Activated CD4-positive, alpha-beta T cell treated with anti-CD3 and anti-CD28 coated beads, Interleukin-2, amount 10 ng/mL, durations not matched to agents 7 days and 5 days (primary cell): ENCODE measurements at regions of chr15 and their contacts with region 1.

Region 1: DNA sequence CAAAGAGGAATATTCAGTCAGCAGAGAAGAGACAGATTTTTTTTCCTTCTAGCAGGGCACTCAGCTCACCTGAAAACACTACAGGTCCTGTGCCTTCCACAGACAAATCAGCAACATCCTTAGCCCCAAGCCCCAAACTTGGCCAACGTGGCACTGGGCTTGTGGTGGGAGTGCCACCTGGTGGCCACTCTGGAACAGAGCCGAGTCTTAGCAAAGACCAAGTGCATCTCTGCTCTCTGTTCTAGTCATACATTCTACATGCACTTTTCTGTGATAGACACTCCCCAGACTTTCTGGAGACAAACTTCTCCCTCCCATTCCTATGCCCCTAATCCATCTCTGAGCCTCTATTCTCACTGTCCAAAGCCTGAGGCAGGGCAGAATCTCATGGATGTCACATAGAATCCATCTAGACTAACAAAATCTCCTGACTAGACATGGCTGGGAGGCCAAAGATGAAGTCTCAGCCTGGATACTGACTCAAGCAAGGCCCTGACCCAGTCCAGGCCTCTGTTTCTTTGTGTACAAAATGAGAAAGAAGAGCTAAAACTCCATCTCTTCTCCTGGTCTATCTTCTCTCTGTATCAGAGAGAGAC is 5.1 kb upstream of the SEMA7A start:
- DNase-seq: peak; percentile 82
- H3K4me3 Mint-ChIP-seq: no peak overlapping the region
- H3K27ac Mint-ChIP-seq: no peak overlapping the region
- H3K4me1 Mint-ChIP-seq: peaks cover 28% of the 10 kb centered on the region
- H3K27me3 Mint-ChIP-seq: no peaks in the 10 kb centered on the region

Region 2: GRCh38 chr15:74251131-74251811 is 187.5 kb before region 1 on chr15:
- CTCF ChIA-PET with region 1: no interaction called
- POLR2A ChIA-PET with region 1: no interaction called
- DNase-seq: no peak
- H3K4me3 Mint-ChIP-seq: no peak overlapping the region
- H3K27ac Mint-ChIP-seq: no peak overlapping the region
- H3K4me1 Mint-ChIP-seq: no peaks in the 10 kb centered on the region
- H3K27me3 Mint-ChIP-seq: peaks cover 5% of the 10 kb centered on the region

Region 3: DNA sequence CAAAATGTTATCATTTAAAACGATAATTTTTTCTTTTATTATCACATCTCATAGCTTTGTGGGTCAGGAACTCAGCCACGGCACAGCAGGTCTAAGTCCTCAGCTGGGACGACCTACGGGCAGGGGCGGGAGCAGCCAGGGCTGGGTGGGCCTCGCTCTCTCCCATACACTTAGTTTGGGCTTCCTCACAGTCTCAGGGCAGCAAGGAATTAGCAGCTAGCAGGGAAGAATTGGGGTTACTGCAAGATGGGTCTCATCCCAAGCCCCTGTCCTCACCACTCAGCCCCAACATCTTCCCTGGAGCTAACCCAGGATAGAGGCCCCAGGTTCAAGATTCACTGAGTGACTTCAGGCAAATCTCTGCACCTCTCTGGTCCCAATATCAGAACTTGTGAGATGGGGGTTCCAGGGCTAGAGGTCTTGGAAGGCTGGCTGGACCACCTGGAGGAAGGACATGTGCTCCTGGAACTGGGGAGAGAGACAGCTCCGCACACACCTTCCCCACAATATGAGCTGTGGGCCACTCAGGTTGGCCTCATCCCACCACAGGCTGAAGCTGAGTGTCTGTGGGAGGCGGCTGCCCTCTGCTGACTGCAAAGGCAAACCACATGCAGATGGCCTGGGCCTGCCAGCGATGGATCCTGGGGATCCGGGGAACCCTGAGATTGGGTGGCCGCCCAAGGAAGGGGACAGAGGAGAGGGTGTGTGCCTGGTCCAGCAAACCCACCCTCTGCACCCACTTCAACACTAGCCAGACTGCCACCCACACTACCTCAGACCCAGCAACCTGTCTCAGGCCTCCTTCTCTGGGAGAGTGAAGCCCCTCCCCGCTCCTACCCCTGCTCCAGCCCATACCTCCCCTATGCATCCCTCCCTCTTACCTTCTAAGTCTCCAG is 116.4 kb before region 1 on chr15:
- CTCF ChIA-PET with region 1: no interaction called
- POLR2A ChIA-PET with region 1: no interaction called
- DNase-seq: peak; percentile 63
- H3K4me3 Mint-ChIP-seq: no peak overlapping the region
- H3K27ac Mint-ChIP-seq: no peak overlapping the region
- H3K4me1 Mint-ChIP-seq: peaks cover 13% of the 10 kb centered on the region
- H3K27me3 Mint-ChIP-seq: peaks cover 8% of the 10 kb centered on the region

Region 4: DNA sequence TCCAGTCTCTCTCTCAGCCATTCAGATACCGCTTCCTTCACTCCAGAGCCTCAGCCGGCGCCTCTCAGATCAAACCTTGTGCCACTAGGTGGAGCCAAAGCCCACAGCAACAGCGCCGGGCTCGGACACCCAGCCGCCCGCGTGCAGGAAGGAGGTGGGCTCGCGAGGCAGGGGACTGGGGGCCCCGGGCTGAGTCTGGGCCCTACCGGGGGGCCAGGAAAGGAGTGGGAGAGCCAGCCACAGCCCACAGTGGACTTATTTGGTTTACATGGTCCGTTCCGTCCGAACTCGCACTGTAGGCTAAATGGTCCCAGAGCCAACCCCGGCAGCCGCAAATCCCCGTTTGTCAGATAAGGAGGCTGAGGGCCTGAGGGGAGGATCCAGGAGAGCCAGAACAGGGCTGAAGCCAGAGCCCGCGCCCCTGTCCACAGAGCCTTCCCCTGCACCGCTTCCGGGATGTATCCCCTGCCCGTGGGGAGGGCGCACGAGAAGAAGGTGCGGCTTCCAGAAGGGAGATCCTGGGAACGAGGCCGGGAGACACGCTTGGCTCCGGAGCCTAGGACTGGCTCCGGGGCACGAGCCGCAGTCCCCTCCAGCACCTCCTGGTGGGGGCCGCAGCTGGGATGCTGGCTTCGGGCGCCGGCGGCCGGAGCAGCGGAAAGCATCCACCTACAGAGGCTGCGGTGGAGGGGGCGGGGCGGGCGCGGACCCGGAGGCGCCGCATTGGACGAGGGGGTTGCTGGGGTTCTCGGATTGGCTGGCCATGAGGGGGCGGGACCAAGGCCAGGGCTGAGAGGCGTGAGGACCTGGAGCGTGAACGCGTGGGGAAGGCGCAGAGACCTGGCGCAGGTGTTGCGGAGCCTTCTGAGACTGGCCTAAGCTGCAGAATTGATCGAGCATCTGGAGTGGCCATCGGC is 64.8 kb before region 1 on chr15:
- CTCF ChIA-PET with region 1: interaction called, 14 read pairs
- POLR2A ChIA-PET with region 1: no interaction called
- DNase-seq: peak; percentile 96
- H3K4me3 Mint-ChIP-seq: peak overlapping the region; percentile 79
- H3K27ac Mint-ChIP-seq: peak overlapping the region; percentile 65
- H3K4me1 Mint-ChIP-seq: peaks cover 25% of the 10 kb centered on the region
- H3K27me3 Mint-ChIP-seq: peaks cover 26% of the 10 kb centered on the region

Region 5: GRCh38 chr15:74389241-74390048 is 49.4 kb before region 1 on chr15:
- CTCF ChIA-PET with region 1: interaction called, 120 read pairs
- POLR2A ChIA-PET with region 1: interaction called, 3 read pairs
- DNase-seq: no peak
- H3K4me3 Mint-ChIP-seq: no peak overlapping the region
- H3K27ac Mint-ChIP-seq: no peak overlapping the region
- H3K4me1 Mint-ChIP-seq: peaks cover 50% of the 10 kb centered on the region
- H3K27me3 Mint-ChIP-seq: no peaks in the 10 kb centered on the region

Region 6: GRCh38 chr15:74451861-74452710 is 13.3 kb after region 1 on chr15:
- CTCF ChIA-PET with region 1: interaction called, 18 read pairs
- POLR2A ChIA-PET with region 1: interaction called, 3 read pairs
- DNase-seq: no peak
- H3K4me3 Mint-ChIP-seq: no peak overlapping the region
- H3K27ac Mint-ChIP-seq: no peak overlapping the region
- H3K4me1 Mint-ChIP-seq: peaks cover 25% of the 10 kb centered on the region
- H3K27me3 Mint-ChIP-seq: no peaks in the 10 kb centered on the region

Region 7: GRCh38 chr15:74489518-74490338 is 50.9 kb after region 1 on chr15:
- CTCF ChIA-PET with region 1: no interaction called
- POLR2A ChIA-PET with region 1: no interaction called
- DNase-seq: peak; percentile 80
- H3K4me3 Mint-ChIP-seq: peak overlapping the region; percentile 46
- H3K27ac Mint-ChIP-seq: peak overlapping the region; percentile 80
- H3K4me1 Mint-ChIP-seq: peaks cover 23% of the 10 kb centered on the region
- H3K27me3 Mint-ChIP-seq: no peaks in the 10 kb centered on the region

Region 8: GRCh38 chr15:74573987-74574386 is 135.2 kb after region 1 on chr15:
- CTCF ChIA-PET with region 1: no interaction called
- POLR2A ChIA-PET with region 1: no interaction called
- DNase-seq: no peak
- H3K4me3 Mint-ChIP-seq: no peak overlapping the region
- H3K27ac Mint-ChIP-seq: no peak overlapping the region
- H3K4me1 Mint-ChIP-seq: peaks cover 6% of the 10 kb centered on the region
- H3K27me3 Mint-ChIP-seq: no peaks in the 10 kb centered on the region